ENCODE measurements at regions of chr22 and their contacts with region 1.

Region 1: GRCh38 chr22:23767673-23768548 is at the start of gene CHCHD10:
- DNase-seq: peak; percentile 76
- ATAC-seq: peak; percentile 66
- H3K4me3 ChIP-seq: peak within 1 kb of the TSS; percentile 97
- H3K27ac ChIP-seq: peak within 1 kb of the TSS; percentile 50
- H3K4me1 ChIP-seq: peaks cover 4% of the 10 kb centered on the region; the same call in 1 of the 2 replicates
- H3K27me3 ChIP-seq: no peaks in the 10 kb centered on the region
- CTCF ChIP-seq: peak; percentile 71
- total RNA-seq, gene CHCHD10: 52.2 and 98.1 TPM in 2 replicates

Region 2: GRCh38 chr22:23657727-23658126 is 110.2 kb before region 1 on chr22:
- CTCF ChIA-PET with region 1: no interaction called
- POLR2A ChIA-PET with region 1: no interaction called
- intact Hi-C with region 1: no loop called
- DNase-seq: no peak
- ATAC-seq: no peak
- H3K4me3 ChIP-seq: no peak overlapping the region
- H3K27ac ChIP-seq: no peak overlapping the region
- H3K4me1 ChIP-seq: no peaks in the 10 kb centered on the region
- H3K27me3 ChIP-seq: no peaks in the 10 kb centered on the region
- CTCF ChIP-seq: no peak

Region 3: DNA sequence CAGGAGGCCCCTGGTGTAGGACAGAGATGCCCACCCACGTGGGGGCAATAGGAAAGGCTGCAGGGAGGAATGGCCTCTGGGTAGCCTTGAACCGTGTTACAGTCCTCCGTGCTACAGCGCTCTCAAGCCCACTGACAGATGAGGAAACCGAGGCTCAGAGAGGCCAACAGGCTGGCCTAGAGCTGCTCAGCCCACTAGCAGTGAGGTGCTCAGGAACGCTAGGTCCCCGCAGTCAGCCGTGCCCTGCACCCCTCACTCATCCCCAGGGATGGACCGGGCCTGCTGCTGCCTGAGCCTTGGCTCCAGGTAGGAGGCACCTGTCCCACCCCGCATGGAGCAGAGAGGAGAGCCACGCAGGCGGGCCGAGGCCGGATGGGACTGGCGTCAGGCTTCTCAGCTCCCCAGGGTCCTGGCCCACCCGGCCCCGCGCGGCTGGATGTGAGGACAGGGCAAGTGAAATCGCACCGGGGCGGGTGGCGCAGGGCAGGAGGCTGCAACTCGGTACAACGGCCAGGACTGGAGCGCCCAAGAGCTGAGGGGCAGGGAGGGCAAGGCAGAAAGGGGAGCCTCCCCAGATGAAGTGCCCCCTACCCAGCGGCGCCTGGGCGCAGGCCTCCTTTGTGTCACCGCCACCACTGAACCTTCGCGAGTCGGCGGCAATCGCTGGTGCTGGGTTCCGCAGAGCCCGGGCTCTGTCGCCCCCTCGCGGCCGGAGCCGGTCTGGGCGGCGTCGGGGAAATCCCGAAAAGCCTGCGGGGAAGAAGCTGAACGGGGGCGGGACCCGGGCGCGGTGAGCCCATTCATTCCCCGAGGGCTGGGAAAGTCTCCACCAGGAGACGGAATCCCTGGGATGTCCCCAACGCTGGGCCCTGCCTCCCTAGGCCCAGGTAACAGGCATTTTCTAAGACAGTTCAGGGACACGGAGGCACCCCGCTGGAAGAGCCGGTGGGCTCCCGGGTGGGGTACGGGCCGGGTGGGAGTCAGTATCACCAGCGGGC is 81.4 kb after region 1 on chr22:
- CTCF ChIA-PET with region 1: interaction called, 6 read pairs
- POLR2A ChIA-PET with region 1: no interaction called
- intact Hi-C with region 1: loop called (anchors 5 kb)
- DNase-seq: peak; percentile 79
- ATAC-seq: peak; percentile 93
- H3K4me3 ChIP-seq: no peak overlapping the region; the same call in 1 of the 2 replicates
- H3K27ac ChIP-seq: no peak overlapping the region
- H3K4me1 ChIP-seq: no peaks in the 10 kb centered on the region
- H3K27me3 ChIP-seq: no peaks in the 10 kb centered on the region
- CTCF ChIP-seq: peak; percentile 83

Region 4: DNA sequence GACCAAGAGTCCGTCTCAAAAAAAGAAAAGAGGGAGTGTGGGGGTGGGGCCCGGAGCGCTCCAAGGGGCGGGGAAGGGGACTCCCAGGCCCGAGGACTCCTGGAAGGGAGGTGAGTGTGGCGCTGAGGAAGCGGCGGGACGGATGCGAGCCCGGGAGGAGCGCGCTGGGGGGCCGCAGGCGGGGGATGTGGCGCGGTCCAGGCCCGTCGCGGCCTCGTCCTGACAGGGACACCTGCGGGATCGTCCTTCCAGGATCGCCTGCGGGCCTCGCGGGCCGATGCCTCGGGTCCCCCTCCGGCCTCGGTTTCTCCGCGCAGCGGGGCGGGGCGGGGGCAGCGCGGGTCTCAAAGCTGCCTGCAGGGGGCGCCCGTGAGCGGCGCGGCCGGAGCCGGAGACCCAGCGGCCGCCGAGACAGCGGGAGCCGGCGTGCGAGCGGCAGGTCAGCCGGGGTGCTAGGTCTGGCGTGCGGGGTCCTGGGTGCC is 655.6 kb after region 1 on chr22:
- CTCF ChIA-PET with region 1: no interaction called
- POLR2A ChIA-PET with region 1: no interaction called
- intact Hi-C with region 1: no loop called
- DNase-seq: peak; percentile 34
- ATAC-seq: peak; percentile 67
- H3K4me3 ChIP-seq: peak overlapping the region; percentile 61
- H3K27ac ChIP-seq: no peak overlapping the region
- H3K4me1 ChIP-seq: no peaks in the 10 kb centered on the region
- H3K27me3 ChIP-seq: no peaks in the 10 kb centered on the region
- CTCF ChIP-seq: peak; percentile 63

Measured in PC-3 (cell line).